GM12878 (cell line): ENCODE measurements at regions of chr3 and their contacts with region 1.

Region 1: DNA sequence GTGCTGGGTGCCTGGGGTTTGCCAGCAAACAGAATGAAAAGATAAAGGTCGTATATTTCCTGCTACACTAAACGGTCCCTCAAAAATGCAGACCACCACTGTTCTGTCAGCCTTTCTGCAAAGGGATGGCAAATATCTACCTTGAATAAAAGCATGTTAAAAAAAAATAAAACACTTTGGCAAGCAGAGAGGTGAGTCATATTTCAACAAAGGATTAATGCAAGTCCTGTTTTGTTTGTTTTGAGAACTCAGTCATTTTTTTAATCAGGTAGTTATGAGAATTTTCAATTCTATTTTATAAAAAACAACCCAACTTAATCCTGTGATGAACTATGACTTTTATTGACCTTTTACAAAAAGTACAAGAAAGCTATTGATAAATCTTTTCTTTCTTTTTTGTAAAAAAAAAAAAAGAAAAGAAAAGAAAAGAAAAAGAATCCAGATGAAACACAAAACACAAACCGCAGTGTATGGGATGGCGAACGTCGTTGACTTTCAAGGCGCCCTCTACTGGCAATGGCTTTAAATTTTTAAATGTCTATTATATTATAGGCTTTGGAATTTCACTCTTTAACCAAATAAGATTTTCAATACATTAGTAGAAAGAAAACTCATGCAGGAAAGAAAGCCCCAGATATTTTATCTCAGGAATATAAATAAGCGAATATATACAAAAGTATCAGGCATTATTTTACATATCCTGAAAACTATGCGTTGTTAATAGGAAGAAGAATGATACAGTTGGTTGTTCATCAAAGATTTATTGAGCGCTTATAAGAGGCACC is 87.8 kb downstream of the NCEH1 start:
- DNase-seq: no peak
- ATAC-seq: peak; percentile 69
- H3K4me3 ChIP-seq: no peak overlapping the region
- H3K27ac ChIP-seq: no peak overlapping the region
- H3K4me1 ChIP-seq: no peaks in the 10 kb centered on the region
- H3K27me3 ChIP-seq: no peaks in the 10 kb centered on the region
- CTCF ChIP-seq: peak; percentile 33 to 63 (median 49)
- EP300 ChIP-seq: no peak
- POLR2A ChIP-seq: no peak
- RAD21 ChIP-seq: peak; percentile 46

Region 2: GRCh38 chr3:171851680-171852058 is 771.4 kb before region 1 on chr3:
- CTCF ChIA-PET with region 1: no interaction called
- POLR2A ChIA-PET with region 1: no interaction called
- RAD21 ChIA-PET with region 1: no interaction called
- SMC1A ChIA-PET with region 1: no interaction called
- in situ Hi-C with region 1: no loop called
- intact Hi-C with region 1: no loop called
- DNase-seq: no peak
- ATAC-seq: no peak
- H3K4me3 ChIP-seq: no peak overlapping the region
- H3K27ac ChIP-seq: no peak overlapping the region
- H3K4me1 ChIP-seq: peaks cover 6% of the 10 kb centered on the region
- H3K27me3 ChIP-seq: no peaks in the 10 kb centered on the region
- CTCF ChIP-seq: no peak
- EP300 ChIP-seq: no peak
- POLR2A ChIP-seq: no peak
- RAD21 ChIP-seq: no peak

Region 3: DNA sequence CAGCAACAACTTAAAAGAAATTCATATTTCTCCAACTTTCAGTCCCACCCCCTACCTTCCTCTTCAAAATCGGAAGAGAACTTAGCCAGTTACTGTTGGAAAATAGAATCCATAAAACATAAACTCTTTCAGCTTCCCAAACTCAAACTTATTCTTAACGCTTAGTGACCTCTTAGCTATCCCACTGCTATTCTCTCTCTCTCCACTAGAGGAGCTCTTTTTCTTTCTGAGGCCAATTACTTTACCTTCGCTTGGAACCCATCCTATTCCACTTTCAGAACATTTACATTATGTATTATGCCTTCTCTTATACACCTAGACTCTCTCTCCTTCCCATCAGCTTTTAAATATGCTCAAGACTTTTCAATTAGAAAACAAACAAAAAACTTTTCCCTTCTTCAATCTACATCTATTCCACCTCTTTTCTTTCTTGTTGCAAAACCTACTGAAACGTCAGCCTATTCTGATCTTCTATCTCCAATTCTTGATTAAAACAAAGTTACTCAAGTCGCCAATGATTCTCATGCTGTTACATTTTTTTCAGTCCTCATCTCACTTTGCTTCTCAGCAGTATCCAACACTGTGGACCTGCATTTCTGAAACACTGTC is 161.5 kb before region 1 on chr3:
- CTCF ChIA-PET with region 1: interaction called, 10 read pairs
- POLR2A ChIA-PET with region 1: no interaction called
- RAD21 ChIA-PET with region 1: no interaction called
- SMC1A ChIA-PET with region 1: interaction called, 4 read pairs
- in situ Hi-C with region 1: no loop called
- intact Hi-C with region 1: no loop called
- DNase-seq: no peak
- ATAC-seq: peak; percentile 84
- H3K4me3 ChIP-seq: no peak overlapping the region
- H3K27ac ChIP-seq: no peak overlapping the region
- H3K4me1 ChIP-seq: no peaks in the 10 kb centered on the region
- H3K27me3 ChIP-seq: no peaks in the 10 kb centered on the region; a peak in 2 of 4 replicates
- CTCF ChIP-seq: peak; percentile 68 to 93 (median 91)
- EP300 ChIP-seq: no peak
- POLR2A ChIP-seq: no peak
- RAD21 ChIP-seq: peak; percentile 59

Region 4: GRCh38 chr3:172601066-172601832 is 21.9 kb before region 1 on chr3:
- CTCF ChIA-PET with region 1: interaction called, 19 read pairs
- POLR2A ChIA-PET with region 1: interaction called, 3 read pairs
- RAD21 ChIA-PET with region 1: interaction called, 9 read pairs
- SMC1A ChIA-PET with region 1: interaction called, 12 read pairs
- in situ Hi-C with region 1: no loop called
- intact Hi-C with region 1: no loop called
- DNase-seq: no peak
- ATAC-seq: no peak
- H3K4me3 ChIP-seq: no peak overlapping the region
- H3K27ac ChIP-seq: no peak overlapping the region
- H3K4me1 ChIP-seq: no peaks in the 10 kb centered on the region
- H3K27me3 ChIP-seq: no peaks in the 10 kb centered on the region
- CTCF ChIP-seq: no peak
- EP300 ChIP-seq: no peak
- POLR2A ChIP-seq: no peak
- RAD21 ChIP-seq: no peak

Region 5: GRCh38 chr3:172607305-172608121 is 15.6 kb before region 1 on chr3:
- CTCF ChIA-PET with region 1: interaction called, 17 read pairs
- POLR2A ChIA-PET with region 1: no interaction called
- RAD21 ChIA-PET with region 1: interaction called, 9 read pairs
- SMC1A ChIA-PET with region 1: interaction called, 7 read pairs
- in situ Hi-C with region 1: no loop called
- intact Hi-C with region 1: no loop called
- DNase-seq: no peak
- ATAC-seq: peak; percentile 76
- H3K4me3 ChIP-seq: no peak overlapping the region
- H3K27ac ChIP-seq: no peak overlapping the region; the same call in 1 of the 2 replicates
- H3K4me1 ChIP-seq: no peaks in the 10 kb centered on the region
- H3K27me3 ChIP-seq: no peaks in the 10 kb centered on the region
- CTCF ChIP-seq: no peak
- EP300 ChIP-seq: no peak
- POLR2A ChIP-seq: no peak
- RAD21 ChIP-seq: no peak

Region 6: GRCh38 chr3:172635588-172635987 is 12.5 kb after region 1 on chr3:
- CTCF ChIA-PET with region 1: interaction called, 24 read pairs
- POLR2A ChIA-PET with region 1: interaction called, 3 read pairs
- RAD21 ChIA-PET with region 1: interaction called, 3 read pairs
- SMC1A ChIA-PET with region 1: interaction called, 12 read pairs
- in situ Hi-C with region 1: no loop called
- intact Hi-C with region 1: no loop called
- DNase-seq: peak; percentile 43
- ATAC-seq: peak; percentile 100
- H3K4me3 ChIP-seq: no peak overlapping the region
- H3K27ac ChIP-seq: no peak overlapping the region
- H3K4me1 ChIP-seq: peaks cover 3% of the 10 kb centered on the region
- H3K27me3 ChIP-seq: no peaks in the 10 kb centered on the region
- CTCF ChIP-seq: peak in 1 of 3 experiments; percentile 37; a peak in 1 of 6 replicates
- EP300 ChIP-seq: 0 out of 4 replicates have a peak, but pooled peaks of 1 of the 2 experiments have one; percentile 26
- POLR2A ChIP-seq: no peak
- RAD21 ChIP-seq: no peak